CD4-positive, alpha-beta memory T cell (primary cell): ENCODE measurements at regions of chr17 and their contacts with region 1.

Region 1: DNA sequence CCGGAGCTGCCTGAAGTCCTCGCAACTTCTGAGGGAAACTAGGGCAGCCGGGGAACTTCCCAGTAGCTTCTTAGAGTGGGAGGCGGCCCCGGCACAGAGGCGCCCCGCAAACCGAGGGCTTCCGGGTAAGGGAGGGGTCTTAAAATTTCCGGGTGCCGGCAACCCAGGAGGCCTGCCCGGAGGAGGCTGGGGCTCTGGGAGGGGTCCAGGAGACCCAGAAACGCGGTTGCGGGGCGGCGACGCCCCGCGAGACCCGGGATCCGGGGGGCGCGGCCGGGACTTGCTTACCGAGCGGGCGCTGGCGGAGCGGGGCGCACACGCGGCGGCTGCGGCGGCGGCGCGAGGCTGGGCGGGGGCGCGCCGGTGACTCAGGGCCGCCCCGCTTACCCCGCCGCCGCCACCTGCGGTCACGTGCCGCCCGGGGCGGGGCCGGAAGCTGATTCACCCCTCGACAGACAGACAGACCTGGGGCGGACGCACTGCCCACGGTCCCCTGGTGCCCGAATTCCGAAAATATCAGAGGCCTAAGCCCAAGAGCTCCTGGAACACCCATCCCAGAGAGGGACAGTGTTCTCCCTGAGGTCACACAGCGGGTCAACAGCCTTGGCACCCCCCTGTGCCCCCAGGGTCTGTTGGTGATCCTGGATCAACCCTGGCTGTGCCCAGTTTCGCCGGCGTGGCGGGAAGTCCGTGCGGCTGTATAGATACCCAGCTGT is at the start of gene FAM83G:
- DNase-seq: peak; percentile 72 to 92 (median 81)
- H3K4me3 ChIP-seq: peak within 1 kb of the TSS; percentile 42 to 57
- H3K4me3 Mint-ChIP-seq: peak within 1 kb of the TSS; percentile 92 to 96 (median 94)
- H3K27ac ChIP-seq: peak within 1 kb of the TSS; percentile 77
- H3K27ac Mint-ChIP-seq: peak within 1 kb of the TSS; percentile 87 to 98 (median 96)
- H3K4me1 ChIP-seq: peaks cover 35% of the 10 kb centered on the region
- H3K4me1 Mint-ChIP-seq: peaks cover 15 to 40% (median 27%) of the 10 kb centered on the region in 4 donors
- H3K27me3 ChIP-seq: no peaks in the 10 kb centered on the region
- H3K27me3 Mint-ChIP-seq: no peaks in the 10 kb centered on the region
- total RNA-seq, gene FAM83G: 13.8 to 15.1 TPM

Region 2: GRCh38 chr17:18626152-18626870 is 378.3 kb before region 1 on chr17:
- CTCF ChIA-PET with region 1: no interaction called
- POLR2A ChIA-PET with region 1: no interaction called
- intact Hi-C with region 1: loop called (anchors 10 kb)
- DNase-seq: no peak
- H3K4me3 ChIP-seq: no peak overlapping the region
- H3K4me3 Mint-ChIP-seq: peak overlapping the region in 6 of 8 donors; percentile 15 to 91 (median 82)
- H3K27ac ChIP-seq: no peak overlapping the region
- H3K27ac Mint-ChIP-seq: peak overlapping the region in 4 of 7 donors; percentile 73 to 93 (median 90)
- H3K4me1 ChIP-seq: peaks cover 6% of the 10 kb centered on the region
- H3K4me1 Mint-ChIP-seq: peaks cover 2 to 20% (median 13%) of the 10 kb centered on the region in 4 donors
- H3K27me3 ChIP-seq: no peaks in the 10 kb centered on the region
- H3K27me3 Mint-ChIP-seq: peaks cover 0 to 4% of the 10 kb centered on the region in 2 donors

Region 3: GRCh38 chr17:18855831-18856569 is 148.6 kb before region 1 on chr17:
- CTCF ChIA-PET with region 1: no interaction called
- POLR2A ChIA-PET with region 1: interaction called, 7 read pairs
- intact Hi-C with region 1: loop called (anchors 1 kb)
- DNase-seq: peak; percentile 85 to 95 (median 86)
- H3K4me3 ChIP-seq: peak overlapping the region; percentile 62 to 79
- H3K4me3 Mint-ChIP-seq: peak overlapping the region; percentile 92 to 99 (median 96)
- H3K27ac ChIP-seq: peak overlapping the region; percentile 48
- H3K27ac Mint-ChIP-seq: peak overlapping the region; percentile 90 to 98 (median 94)
- H3K4me1 ChIP-seq: peaks cover 46% of the 10 kb centered on the region
- H3K4me1 Mint-ChIP-seq: peaks cover 31 to 50% (median 41%) of the 10 kb centered on the region in 4 donors
- H3K27me3 ChIP-seq: no peaks in the 10 kb centered on the region
- H3K27me3 Mint-ChIP-seq: no peaks in the 10 kb centered on the region

Region 4: GRCh38 chr17:18949566-18949965 is 55.0 kb before region 1 on chr17:
- CTCF ChIA-PET with region 1: no interaction called
- POLR2A ChIA-PET with region 1: interaction called, 11 read pairs
- intact Hi-C with region 1: loop called (anchors 2 kb)
- DNase-seq: no peak
- H3K4me3 ChIP-seq: no peak overlapping the region
- H3K4me3 Mint-ChIP-seq: no peak overlapping the region
- H3K27ac ChIP-seq: no peak overlapping the region
- H3K27ac Mint-ChIP-seq: no peak overlapping the region
- H3K4me1 ChIP-seq: peaks cover 10% of the 10 kb centered on the region
- H3K4me1 Mint-ChIP-seq: peaks cover 11 to 20% (median 17%) of the 10 kb centered on the region in 4 donors
- H3K27me3 ChIP-seq: no peaks in the 10 kb centered on the region
- H3K27me3 Mint-ChIP-seq: peaks cover 0 to 2% of the 10 kb centered on the region in 2 donors

Region 5: GRCh38 chr17:19019036-19019941 is 14.7 kb after region 1 on chr17:
- CTCF ChIA-PET with region 1: interaction called, 3 read pairs
- POLR2A ChIA-PET with region 1: interaction called, 12 read pairs
- intact Hi-C with region 1: no loop called
- DNase-seq: peak in 1 of 5 donors; percentile 25
- H3K4me3 ChIP-seq: no peak overlapping the region
- H3K4me3 Mint-ChIP-seq: peak overlapping the region in 1 of 8 donors; percentile 21
- H3K27ac ChIP-seq: no peak overlapping the region
- H3K27ac Mint-ChIP-seq: peak overlapping the region in 5 of 7 donors; percentile 8 to 81 (median 36)
- H3K4me1 ChIP-seq: peaks cover 7% of the 10 kb centered on the region
- H3K4me1 Mint-ChIP-seq: peaks cover 11 to 24% (median 17%) of the 10 kb centered on the region in 4 donors
- H3K27me3 ChIP-seq: no peaks in the 10 kb centered on the region
- H3K27me3 Mint-ChIP-seq: peaks cover 2 to 3% of the 10 kb centered on the region in 2 donors